A549 (cell line): ENCODE measurements at regions of chr19 and their contacts with region 1.

Region 1: GRCh38 chr19:55632463-55632834 is 8.1 kb upstream of the ZNF784 start:
- DNase-seq: peak; percentile 80 to 99
- ATAC-seq: peak; percentile 70 to 81
- H3K4me3 ChIP-seq: no peak overlapping the region
- H3K27ac ChIP-seq: no peak overlapping the region
- H3K4me1 ChIP-seq: peaks cover 17% of the 10 kb centered on the region
- CTCF ChIP-seq: peak; percentile 91
- EP300 ChIP-seq: no peak
- POLR2A ChIP-seq: no peak
- RAD21 ChIP-seq: peak; percentile 62 to 82

Region 2: DNA sequence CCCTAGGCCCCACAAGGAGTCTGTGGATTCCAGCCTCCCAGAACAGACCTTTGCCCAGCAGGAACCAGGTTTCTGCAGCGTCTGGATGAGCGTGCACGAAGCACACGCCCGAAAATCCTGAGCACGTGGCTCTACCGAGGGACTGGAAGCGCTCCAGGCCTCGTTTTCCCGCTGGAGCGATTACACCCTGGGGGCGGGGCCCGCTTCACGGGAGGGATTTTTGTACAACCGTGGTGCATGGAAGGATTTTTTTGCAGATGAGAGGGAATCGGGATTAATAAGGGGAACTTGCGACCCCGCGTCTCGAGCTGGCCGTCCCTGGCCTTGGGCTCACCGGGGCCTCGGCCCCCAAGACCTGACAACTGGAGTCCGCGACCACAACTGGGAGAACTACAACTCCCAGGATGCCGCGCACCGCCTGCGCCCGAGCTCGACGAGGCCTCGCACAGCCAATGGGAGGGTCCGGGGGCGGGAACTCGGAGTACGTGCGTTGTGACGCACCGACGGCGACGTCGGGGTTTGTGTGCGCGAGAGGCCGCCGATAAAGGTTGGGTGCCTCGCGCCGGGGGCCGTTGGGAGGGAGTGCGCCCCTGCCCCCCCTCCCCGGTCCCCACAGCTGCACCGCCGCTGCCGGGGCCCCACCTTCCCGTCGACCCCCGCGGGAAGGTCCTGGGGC is 156.2 kb before region 1 on chr19 and contains the start of gene ZNF628:
- CTCF ChIA-PET with region 1: interaction called, 115 read pairs
- POLR2A ChIA-PET with region 1: interaction called, 4 read pairs
- DNase-seq: peak; percentile 99 to 100
- ATAC-seq: peak; percentile 94
- H3K4me3 ChIP-seq: peak within 1 kb of the TSS; percentile 56
- H3K27ac ChIP-seq: peak within 1 kb of the TSS; percentile 84 to 92
- H3K4me1 ChIP-seq: peaks cover 26% of the 10 kb centered on the region
- CTCF ChIP-seq: no peak
- EP300 ChIP-seq: no peak
- POLR2A ChIP-seq: peak; percentile 26; the same call in 1 of the 2 replicates
- RAD21 ChIP-seq: no peak
- polyA plus RNA-seq, gene ZNF628: 0.32 and 0.48 TPM in 2 replicates

Region 3: GRCh38 chr19:55549500-55550320 is 82.7 kb before region 1 on chr19:
- CTCF ChIA-PET with region 1: interaction called, 43 read pairs
- POLR2A ChIA-PET with region 1: no interaction called
- DNase-seq: peak; percentile 88
- ATAC-seq: peak; percentile 74 to 75
- H3K4me3 ChIP-seq: peak overlapping the region; percentile 38
- H3K27ac ChIP-seq: peak overlapping the region; percentile 97 to 99
- H3K4me1 ChIP-seq: peaks cover 76% of the 10 kb centered on the region
- CTCF ChIP-seq: no peak; the same call in 2 of the 3 replicates
- EP300 ChIP-seq: no peak
- POLR2A ChIP-seq: peak; percentile 33; the same call in 1 of the 2 replicates
- RAD21 ChIP-seq: peak; percentile 41 to 42; a peak in 2 of 5 replicates

Region 4: GRCh38 chr19:55605207-55605636 is 27.2 kb before region 1 on chr19:
- CTCF ChIA-PET with region 1: interaction called, 148 read pairs
- POLR2A ChIA-PET with region 1: interaction called, 7 read pairs
- DNase-seq: peak; percentile 93 to 99
- ATAC-seq: peak; percentile 72 to 85
- H3K4me3 ChIP-seq: peak overlapping the region; percentile 82
- H3K27ac ChIP-seq: peak overlapping the region; percentile 94 to 95
- H3K4me1 ChIP-seq: peaks cover 23% of the 10 kb centered on the region
- CTCF ChIP-seq: no peak
- EP300 ChIP-seq: no peak
- POLR2A ChIP-seq: no peak
- RAD21 ChIP-seq: no peak

Region 5: DNA sequence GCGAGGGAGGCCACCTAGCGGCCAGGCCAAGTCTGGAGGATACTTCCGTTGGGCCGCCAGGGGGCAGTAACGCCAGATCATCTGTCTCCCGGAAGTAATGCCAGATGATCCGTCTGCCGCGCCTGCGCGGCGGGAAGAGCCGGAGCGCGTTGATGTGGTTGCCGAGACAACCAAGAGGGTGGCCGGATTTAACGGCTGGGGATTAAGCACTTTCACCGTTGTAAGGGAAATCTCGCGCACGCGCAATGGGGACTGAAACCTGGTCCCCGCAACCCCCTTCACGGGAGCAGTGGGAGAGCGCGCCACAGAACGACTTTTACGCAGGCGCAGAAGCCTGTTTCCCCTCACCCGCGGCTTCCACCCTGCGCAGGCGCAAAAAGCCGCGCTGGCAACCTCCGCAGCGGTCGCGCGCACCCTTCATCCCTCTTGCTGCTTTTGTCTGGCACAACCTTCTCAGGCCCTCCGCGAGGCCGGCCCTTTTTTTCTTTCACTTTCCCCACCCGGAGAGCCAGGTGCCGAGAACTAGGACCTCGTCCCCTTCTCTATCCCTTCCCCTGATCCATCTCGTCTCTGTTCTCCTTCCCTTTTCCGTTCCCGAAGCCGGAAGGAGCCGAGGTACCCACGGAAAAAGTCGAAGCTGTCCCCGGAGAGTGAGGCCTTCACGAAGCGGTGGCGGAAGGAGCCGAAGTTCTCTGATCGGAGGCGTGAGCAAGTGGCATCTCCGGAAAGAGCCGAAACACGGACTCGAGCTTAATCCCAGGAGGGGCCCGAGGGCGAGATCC is 21.5 kb after region 1 on chr19:
- CTCF ChIA-PET with region 1: interaction called, 53 read pairs
- POLR2A ChIA-PET with region 1: interaction called, 20 read pairs
- DNase-seq: peak; percentile 98 to 100
- ATAC-seq: peak; percentile 71 to 85
- H3K4me3 ChIP-seq: peak overlapping the region; percentile 68
- H3K27ac ChIP-seq: peak overlapping the region; percentile 96 to 98
- H3K4me1 ChIP-seq: peaks cover 34% of the 10 kb centered on the region
- CTCF ChIP-seq: peak; percentile 100
- EP300 ChIP-seq: no peak
- POLR2A ChIP-seq: peak; percentile 86
- RAD21 ChIP-seq: peak; percentile 59 to 65